Activated CD4-positive, alpha-beta memory T cell treated with anti-CD3 and anti-CD28 coated beads, Interleukin-2, amount 10 ng/mL, durations not matched to agents 7 days and 5 days (primary cell): ENCODE measurements at regions of chr1 and their contacts with region 1.

Region 1: GRCh38 chr1:23743287-23744052 is at the start of gene ELOA:
- DNase-seq: peak; percentile 84
- H3K4me3 Mint-ChIP-seq: peak within 1 kb of the TSS; percentile 87
- H3K27ac Mint-ChIP-seq: peak within 1 kb of the TSS; percentile 87
- H3K4me1 Mint-ChIP-seq: peaks cover 44% of the 10 kb centered on the region
- H3K27me3 Mint-ChIP-seq: no peaks in the 10 kb centered on the region
- total RNA-seq, gene ELOA: 34.1 to 35.2 TPM

Region 2: DNA sequence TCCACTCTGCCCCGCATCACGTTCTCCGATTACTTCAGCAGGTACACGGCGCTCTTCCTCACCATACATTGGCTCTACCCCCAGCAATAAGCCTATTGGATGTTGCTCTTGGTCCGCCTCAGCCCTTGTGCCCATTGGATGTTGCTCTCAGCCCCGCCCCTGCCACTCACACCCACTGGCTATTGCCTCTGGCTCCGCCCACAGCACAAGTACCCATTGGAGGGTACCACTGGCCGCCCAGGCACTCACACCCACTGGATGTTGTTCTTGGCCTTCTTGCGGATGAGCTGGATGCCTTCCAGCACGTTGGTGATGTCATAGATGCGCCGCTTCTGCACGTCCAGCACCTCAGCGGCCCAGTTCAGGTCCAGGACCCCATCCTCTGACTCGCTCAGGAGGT is 221.9 kb before region 1 on chr1:
- CTCF ChIA-PET with region 1: no interaction called
- POLR2A ChIA-PET with region 1: no interaction called
- DNase-seq: no peak
- H3K4me3 Mint-ChIP-seq: no peak overlapping the region
- H3K27ac Mint-ChIP-seq: peak overlapping the region; percentile 19
- H3K4me1 Mint-ChIP-seq: peaks cover 50% of the 10 kb centered on the region
- H3K27me3 Mint-ChIP-seq: no peaks in the 10 kb centered on the region

Region 3: GRCh38 chr1:23699280-23700179 is 43.9 kb before region 1 on chr1:
- CTCF ChIA-PET with region 1: interaction called, 6 read pairs
- POLR2A ChIA-PET with region 1: interaction called, 10 read pairs
- DNase-seq: no peak
- H3K4me3 Mint-ChIP-seq: no peak overlapping the region
- H3K27ac Mint-ChIP-seq: peak overlapping the region; percentile 32
- H3K4me1 Mint-ChIP-seq: peaks cover 49% of the 10 kb centered on the region
- H3K27me3 Mint-ChIP-seq: no peaks in the 10 kb centered on the region

Region 4: GRCh38 chr1:23772049-23772853 is 28.8 kb after region 1 on chr1:
- CTCF ChIA-PET with region 1: interaction called, 14 read pairs
- POLR2A ChIA-PET with region 1: interaction called, 23 read pairs
- DNase-seq: peak; percentile 88
- H3K4me3 Mint-ChIP-seq: no peak overlapping the region
- H3K27ac Mint-ChIP-seq: no peak overlapping the region
- H3K4me1 Mint-ChIP-seq: peaks cover 37% of the 10 kb centered on the region
- H3K27me3 Mint-ChIP-seq: no peaks in the 10 kb centered on the region

Region 5: DNA sequence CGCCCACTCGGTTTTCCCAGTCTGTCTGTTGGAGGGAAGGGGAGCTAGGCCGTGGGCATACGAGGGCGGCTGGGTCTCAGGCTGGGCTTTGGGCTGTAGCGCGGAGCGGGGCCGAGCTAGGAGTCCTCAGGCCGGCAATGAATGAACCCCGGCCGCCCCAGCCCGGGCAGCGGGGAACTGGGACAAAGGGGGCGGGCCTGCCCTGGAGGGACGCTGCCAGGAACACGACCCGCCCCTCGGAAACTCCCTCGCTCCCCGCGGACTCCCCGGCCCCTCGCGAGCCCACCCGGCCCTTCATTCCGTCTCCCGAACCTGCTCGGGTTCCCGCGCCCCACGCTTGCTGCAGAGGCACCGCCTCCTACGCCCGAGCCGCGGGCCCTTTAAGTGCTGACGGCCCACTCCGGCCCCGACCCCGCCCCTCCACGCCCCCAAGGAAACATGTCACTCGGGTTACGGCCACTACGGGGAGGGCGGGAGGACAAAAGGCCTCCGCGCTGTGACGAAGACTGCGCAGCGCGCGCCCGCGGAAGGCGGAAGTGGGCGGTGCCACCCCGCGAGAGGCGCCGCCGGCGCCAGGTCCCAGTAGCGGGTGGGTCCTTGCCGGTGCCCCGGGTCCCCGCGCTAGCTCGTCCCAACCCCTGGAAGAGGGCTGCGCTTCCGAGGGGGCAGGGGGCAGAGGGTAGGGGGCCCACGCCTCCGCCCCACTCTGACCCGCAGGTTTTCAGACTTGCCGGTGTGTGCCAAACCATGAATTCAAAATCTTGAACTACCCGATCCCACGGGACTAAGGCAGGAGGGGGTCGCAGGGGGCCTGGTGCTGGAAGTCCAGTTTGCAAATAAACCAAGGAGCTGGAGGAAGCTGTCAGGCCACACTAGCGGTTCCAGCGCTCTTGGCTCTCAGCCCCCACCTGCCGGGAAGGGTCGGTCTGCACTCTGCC is 57.2 kb after region 1 on chr1 and contains the start of gene GALE:
- CTCF ChIA-PET with region 1: interaction called, 3 read pairs
- POLR2A ChIA-PET with region 1: interaction called, 10 read pairs
- DNase-seq: peak; percentile 98
- H3K4me3 Mint-ChIP-seq: peak within 1 kb of the TSS; percentile 96
- H3K27ac Mint-ChIP-seq: peak within 1 kb of the TSS; percentile 95
- H3K4me1 Mint-ChIP-seq: peaks cover 25% of the 10 kb centered on the region
- H3K27me3 Mint-ChIP-seq: no peaks in the 10 kb centered on the region
- total RNA-seq, gene GALE: 33.5 to 37.6 TPM